Activated CD4-positive, alpha-beta memory T cell treated with anti-CD3 and anti-CD28 coated beads, Interleukin-2, amount 10 ng/mL, durations not matched to agents 7 days and 5 days (primary cell): ENCODE measurements at regions of chr17 and their contacts with region 1.

Region 1: DNA sequence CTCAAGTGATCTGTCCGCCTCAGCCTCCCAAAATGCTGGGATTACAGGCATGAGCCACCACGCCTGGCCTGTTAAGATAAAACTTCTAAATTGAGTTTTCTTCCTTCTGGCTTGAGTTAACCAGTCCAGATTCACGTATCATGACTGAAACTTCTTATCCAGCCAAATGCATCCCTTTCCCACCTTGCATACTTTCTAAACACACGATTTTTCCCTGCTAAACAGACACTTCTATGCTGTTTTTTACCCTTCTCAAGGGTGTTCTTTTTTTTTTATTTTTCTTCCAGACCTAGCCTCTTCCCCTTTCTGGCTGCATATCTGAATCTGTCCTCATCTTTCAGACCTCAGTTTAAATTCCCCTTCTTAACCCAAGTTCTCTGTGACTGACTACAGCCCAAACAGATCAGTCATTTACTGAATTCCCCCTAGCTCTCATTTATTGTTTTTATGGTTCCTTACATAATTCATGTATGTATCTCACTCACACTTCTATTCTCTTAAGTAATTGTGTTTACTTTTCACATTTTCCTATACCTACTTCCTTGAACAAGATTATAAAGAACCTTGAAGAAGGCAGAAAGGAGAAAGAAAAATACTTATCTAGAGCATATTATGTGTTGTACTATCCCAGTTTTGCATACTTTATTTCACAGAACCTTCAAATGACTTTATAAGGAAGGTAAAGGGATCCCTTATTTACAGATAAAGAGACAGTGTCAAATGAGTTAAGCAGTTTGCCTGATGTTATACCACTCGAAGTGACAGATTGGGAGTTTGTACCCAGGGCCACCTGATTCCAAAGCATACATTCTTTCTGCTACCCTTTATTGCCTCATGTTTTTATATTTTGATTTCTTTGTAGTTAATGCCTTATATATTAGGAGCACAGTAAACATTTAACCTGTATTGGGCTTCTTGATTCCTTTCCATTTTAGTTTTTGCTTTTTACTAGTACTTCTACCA is 5.2 kb downstream of the EVI2B start:
- DNase-seq: no peak
- H3K4me3 Mint-ChIP-seq: peak overlapping the region; percentile 83
- H3K27ac Mint-ChIP-seq: peak overlapping the region; percentile 80
- H3K4me1 Mint-ChIP-seq: peaks cover 46% of the 10 kb centered on the region
- H3K27me3 Mint-ChIP-seq: no peaks in the 10 kb centered on the region

Region 2: GRCh38 chr17:31156326-31156725 is 152.3 kb before region 1 on chr17:
- CTCF ChIA-PET with region 1: no interaction called
- POLR2A ChIA-PET with region 1: no interaction called
- DNase-seq: no peak
- H3K4me3 Mint-ChIP-seq: no peak overlapping the region
- H3K27ac Mint-ChIP-seq: no peak overlapping the region
- H3K4me1 Mint-ChIP-seq: peaks cover 15% of the 10 kb centered on the region
- H3K27me3 Mint-ChIP-seq: no peaks in the 10 kb centered on the region

Region 3: DNA sequence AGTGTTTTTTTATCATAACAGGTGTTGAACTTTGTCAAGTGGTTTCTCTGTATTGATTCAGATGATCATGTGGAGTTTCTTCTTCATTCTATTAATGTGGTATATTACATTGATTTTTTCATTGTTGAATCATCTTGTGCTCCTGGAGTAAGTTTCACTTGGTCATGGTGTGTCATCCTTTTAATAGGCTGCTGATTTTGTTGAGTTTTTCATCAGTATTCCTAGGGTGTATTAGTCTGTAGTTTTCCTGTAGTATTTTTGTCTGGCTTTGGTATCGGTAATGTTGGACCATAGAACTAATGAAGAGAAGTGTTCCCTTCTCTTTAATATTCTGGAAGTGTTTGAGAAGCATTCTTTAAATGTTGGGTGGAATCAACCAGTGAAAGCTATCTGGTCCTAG is 110.7 kb before region 1 on chr17:
- CTCF ChIA-PET with region 1: no interaction called
- POLR2A ChIA-PET with region 1: no interaction called
- DNase-seq: no peak
- H3K4me3 Mint-ChIP-seq: no peak overlapping the region
- H3K27ac Mint-ChIP-seq: no peak overlapping the region
- H3K4me1 Mint-ChIP-seq: no peaks in the 10 kb centered on the region
- H3K27me3 Mint-ChIP-seq: no peaks in the 10 kb centered on the region

Region 4: GRCh38 chr17:31248986-31249834 is 59.4 kb before region 1 on chr17:
- CTCF ChIA-PET with region 1: no interaction called
- POLR2A ChIA-PET with region 1: no interaction called
- DNase-seq: no peak
- H3K4me3 Mint-ChIP-seq: no peak overlapping the region
- H3K27ac Mint-ChIP-seq: no peak overlapping the region
- H3K4me1 Mint-ChIP-seq: peaks cover 2% of the 10 kb centered on the region
- H3K27me3 Mint-ChIP-seq: no peaks in the 10 kb centered on the region

Region 5: GRCh38 chr17:31321481-31321880 is 12.8 kb after region 1 on chr17 and contains the start of gene EVI2A:
- CTCF ChIA-PET with region 1: interaction called, 4 read pairs
- POLR2A ChIA-PET with region 1: interaction called, 287 read pairs
- DNase-seq: peak; percentile 86
- H3K4me3 Mint-ChIP-seq: peak within 1 kb of the TSS; percentile 79
- H3K27ac Mint-ChIP-seq: peak within 1 kb of the TSS; percentile 99
- H3K4me1 Mint-ChIP-seq: peaks cover 30% of the 10 kb centered on the region
- H3K27me3 Mint-ChIP-seq: no peaks in the 10 kb centered on the region
- total RNA-seq, gene EVI2A: 109 to 110 TPM

Region 6: DNA sequence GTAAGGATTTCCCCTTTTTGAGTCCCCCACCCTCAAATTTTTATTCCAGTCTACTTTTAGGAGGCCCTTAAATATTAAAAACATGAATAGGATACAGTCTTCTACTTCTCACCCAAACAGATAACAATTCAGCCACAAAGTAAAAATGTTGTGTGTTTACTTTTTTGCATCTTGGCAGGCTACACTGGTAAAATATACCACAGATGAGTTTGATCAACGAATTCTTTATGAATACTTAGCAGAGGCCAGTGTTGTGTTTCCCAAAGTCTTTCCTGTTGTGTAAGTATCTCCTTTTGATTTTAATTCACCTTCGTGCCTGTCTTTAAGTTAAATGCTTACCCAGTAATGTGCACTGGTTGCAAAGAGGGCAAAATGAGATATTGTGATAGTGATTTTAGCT is 48.4 kb after region 1 on chr17:
- CTCF ChIA-PET with region 1: no interaction called
- POLR2A ChIA-PET with region 1: no interaction called
- DNase-seq: no peak
- H3K4me3 Mint-ChIP-seq: no peak overlapping the region
- H3K27ac Mint-ChIP-seq: no peak overlapping the region
- H3K4me1 Mint-ChIP-seq: no peaks in the 10 kb centered on the region
- H3K27me3 Mint-ChIP-seq: no peaks in the 10 kb centered on the region